Activated CD4-positive, alpha-beta T cell treated with anti-CD3 and anti-CD28 coated beads, Interleukin-2, amount 10 ng/mL, durations not matched to agents 24 days and 14 days (primary cell): ENCODE measurements at regions of chr1 and their contacts with region 1.

Region 1: DNA sequence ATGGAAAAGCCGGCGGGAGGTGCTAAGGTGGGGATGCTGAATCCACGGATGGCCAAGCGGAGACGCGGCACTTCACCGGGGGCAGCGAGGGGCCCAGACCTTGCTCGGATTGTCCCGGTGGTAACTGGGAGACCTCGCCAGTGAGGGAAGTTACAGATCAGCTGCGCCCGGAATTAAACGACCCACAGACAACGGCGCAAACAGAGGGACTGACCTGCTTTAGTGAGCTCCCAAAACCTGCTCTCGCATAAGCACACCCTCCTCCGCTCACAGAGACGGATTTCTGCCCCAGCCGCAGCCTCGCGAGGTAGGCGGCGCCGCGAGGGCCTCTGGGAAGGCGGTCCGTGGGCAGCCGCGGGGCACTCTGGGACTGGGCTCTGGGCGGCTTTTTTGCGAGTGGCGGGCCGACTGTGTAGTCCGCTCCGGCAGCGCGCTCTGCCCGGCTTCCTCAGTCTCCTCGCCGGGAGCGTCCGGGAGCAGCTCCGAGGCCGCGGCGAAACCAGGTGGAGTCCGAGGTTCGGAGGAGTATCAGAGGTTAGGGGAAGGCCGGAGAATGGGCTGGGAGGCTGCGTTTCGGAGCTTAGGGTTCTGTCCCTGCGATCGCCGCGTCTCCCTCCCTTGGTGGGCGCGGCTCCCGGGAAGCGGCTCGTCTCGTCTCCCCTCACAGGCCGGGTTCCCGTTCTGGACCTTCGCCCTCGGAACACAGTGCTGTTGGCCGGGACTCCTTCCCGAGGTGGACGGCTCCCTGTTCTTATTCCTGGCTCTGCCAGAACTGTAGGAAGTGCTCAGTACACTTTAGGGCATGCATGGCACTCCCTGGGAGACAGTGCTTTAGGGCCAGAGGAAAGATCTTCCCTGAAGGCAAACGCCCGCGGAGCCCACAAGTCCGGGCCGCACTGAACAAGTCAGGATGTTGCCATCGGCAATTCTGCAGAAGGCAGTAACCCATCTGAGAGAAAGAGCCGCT is at the start of gene EXO5:
- DNase-seq: peak; percentile 96
- H3K4me3 Mint-ChIP-seq: peak within 1 kb of the TSS; percentile 88
- H3K27ac Mint-ChIP-seq: peak within 1 kb of the TSS; percentile 88
- H3K4me1 Mint-ChIP-seq: peaks cover 11% of the 10 kb centered on the region
- H3K27me3 Mint-ChIP-seq: no peaks in the 10 kb centered on the region
- total RNA-seq, gene EXO5: 17.2 and 18.0 TPM in 2 replicates

Region 2: DNA sequence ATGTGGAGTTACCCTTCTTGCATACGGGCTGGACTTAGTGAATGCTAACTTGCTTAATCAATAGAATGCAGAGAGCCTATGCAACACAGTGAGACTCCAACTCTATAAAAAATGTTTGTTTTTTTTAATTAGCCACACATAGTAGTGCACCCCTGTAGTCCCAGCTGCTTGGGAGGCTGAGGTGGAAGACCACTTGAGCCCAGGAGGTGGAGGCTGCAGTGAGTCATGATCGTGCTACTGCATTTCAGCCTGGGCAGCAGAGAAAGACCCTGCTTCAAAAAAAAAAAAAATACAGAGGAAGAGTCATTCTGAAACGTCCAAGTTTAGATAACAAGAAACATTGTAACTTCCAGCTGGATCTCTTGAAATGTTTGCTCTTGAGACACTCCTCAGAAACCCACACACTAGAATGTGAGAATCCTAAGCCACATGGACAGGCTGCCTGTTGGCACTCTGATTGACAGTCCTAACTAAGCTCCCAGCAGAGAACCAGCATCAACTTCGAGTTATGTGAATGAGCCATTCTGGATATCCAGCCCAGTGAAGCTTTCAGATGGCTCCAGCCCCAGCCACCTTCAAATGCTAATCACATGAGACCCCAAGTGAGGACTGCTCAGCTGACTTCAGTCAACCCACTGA is 488.1 kb before region 1 on chr1:
- intact Hi-C with region 1: no loop called
- DNase-seq: no peak
- H3K4me3 Mint-ChIP-seq: no peak overlapping the region
- H3K27ac Mint-ChIP-seq: no peak overlapping the region
- H3K4me1 Mint-ChIP-seq: no peaks in the 10 kb centered on the region
- H3K27me3 Mint-ChIP-seq: peaks cover 23% of the 10 kb centered on the region

Region 3: DNA sequence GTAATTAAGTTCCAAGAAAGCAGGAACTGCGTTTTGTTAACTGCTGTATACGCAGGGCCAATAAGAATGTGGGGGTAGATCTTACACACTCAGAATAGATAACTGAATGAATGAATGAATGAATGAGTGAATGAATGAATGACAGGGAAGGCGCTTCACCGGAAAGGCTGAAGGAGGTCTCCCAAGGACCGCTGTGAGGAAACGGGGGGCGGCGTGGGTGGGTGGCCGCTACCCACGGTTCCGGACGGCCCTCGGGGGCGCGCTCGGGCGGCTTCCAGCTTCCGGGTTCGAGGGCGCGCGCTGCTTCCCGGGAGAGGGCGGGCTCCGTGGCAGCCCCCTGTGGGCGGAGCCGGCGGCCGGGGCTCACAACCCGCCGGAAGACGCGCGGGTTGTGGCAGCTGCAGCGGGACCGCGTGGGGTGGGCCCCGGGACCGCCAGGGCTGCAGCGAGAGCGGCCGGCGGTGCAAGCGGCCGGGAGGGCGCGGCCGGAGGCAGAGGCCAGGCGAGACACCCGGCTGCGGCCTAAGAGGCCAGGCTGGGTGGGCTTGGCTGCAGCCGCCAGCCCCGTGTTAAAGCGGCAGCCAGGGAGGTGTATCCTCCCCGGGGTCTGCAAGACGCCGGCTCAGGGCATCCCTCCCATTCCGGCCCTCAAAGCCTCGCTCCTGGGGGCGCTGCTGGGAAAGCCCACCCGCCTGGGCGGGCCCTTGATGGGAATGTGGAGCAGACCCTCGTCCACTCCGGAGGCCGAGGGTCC is 31.6 kb before region 1 on chr1 and contains the start of gene ZFP69:
- intact Hi-C with region 1: loop called (anchors 2 kb)
- DNase-seq: peak; percentile 91
- H3K4me3 Mint-ChIP-seq: peak within 1 kb of the TSS; percentile 77
- H3K27ac Mint-ChIP-seq: peak within 1 kb of the TSS; percentile 45
- H3K4me1 Mint-ChIP-seq: peaks cover 18% of the 10 kb centered on the region
- H3K27me3 Mint-ChIP-seq: no peaks in the 10 kb centered on the region
- total RNA-seq, gene ZFP69: 3.1 and 3.9 TPM in 2 replicates

Region 4: GRCh38 chr1:40531381-40532061 is 22.9 kb after region 1 on chr1 and contains the start of gene ZNF684:
- intact Hi-C with region 1: loop called (anchors 2 kb)
- DNase-seq: peak; percentile 96
- H3K4me3 Mint-ChIP-seq: peak within 1 kb of the TSS; percentile 97
- H3K27ac Mint-ChIP-seq: peak within 1 kb of the TSS; percentile 93
- H3K4me1 Mint-ChIP-seq: peaks cover 22% of the 10 kb centered on the region
- H3K27me3 Mint-ChIP-seq: peaks cover 12% of the 10 kb centered on the region
- total RNA-seq, gene ZNF684: 4.7 and 4.9 TPM in 2 replicates